BJ (cell line): ENCODE measurements at regions of chr2 and their contacts with region 1.

Region 1: DNA sequence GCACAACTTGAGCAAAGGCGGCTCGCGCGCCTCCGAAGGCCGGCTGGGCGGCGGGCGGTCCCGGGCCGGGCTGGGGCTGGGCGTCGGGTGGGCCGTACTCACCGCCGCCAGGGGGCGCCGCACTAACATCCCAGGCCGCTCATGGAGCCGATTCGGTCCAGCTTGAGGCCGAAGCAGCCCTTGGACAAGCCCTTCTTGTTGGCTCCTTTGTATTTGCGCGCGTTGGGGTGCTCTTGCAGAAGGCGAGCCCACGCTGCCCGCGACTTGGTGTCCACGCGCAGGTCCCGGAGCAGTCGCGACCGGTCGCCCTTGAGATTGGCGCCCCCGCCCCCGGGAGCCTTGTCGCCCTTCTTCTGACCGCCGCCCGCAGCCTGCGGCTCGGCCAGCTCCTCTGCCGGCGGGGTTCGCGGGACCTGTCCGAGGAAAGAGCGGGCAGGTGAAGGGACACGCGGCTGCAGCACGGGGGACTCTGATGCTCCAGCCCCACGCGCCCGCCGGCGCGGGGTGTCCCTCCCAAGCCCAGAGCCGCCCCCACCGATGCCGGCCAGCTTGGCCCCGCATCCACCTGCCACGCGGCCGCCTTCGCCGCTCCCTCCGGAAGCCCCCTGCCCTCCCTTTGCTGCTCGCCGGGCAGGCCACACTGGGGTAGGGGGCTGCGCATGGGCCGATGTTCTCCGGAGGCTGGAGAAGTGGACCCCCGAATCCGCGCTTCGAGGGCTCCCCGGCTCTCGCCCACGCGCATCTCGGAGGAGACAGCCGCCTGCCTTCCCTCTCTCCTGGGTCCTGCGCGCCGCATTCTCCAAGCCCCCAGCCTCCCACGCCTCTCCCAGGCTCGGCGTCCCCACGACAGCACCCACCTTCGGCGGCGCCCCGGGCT is 655 bp downstream of the NPPC start:
- DNase-seq: no peak
- H3K4me3 ChIP-seq: peak overlapping the region; percentile 32
- H3K27me3 ChIP-seq: peaks cover 39% of the 10 kb centered on the region
- CTCF ChIP-seq: peak; percentile 72

Region 2: GRCh38 chr2:231900486-231900942 is 25.0 kb before region 1 on chr2:
- CTCF ChIA-PET with region 1: interaction called, 68 read pairs
- POLR2A ChIA-PET with region 1: no interaction called
- DNase-seq: no peak
- H3K4me3 ChIP-seq: no peak overlapping the region
- H3K27me3 ChIP-seq: peaks cover 5% of the 10 kb centered on the region
- CTCF ChIP-seq: peak; percentile 95

Region 3: DNA sequence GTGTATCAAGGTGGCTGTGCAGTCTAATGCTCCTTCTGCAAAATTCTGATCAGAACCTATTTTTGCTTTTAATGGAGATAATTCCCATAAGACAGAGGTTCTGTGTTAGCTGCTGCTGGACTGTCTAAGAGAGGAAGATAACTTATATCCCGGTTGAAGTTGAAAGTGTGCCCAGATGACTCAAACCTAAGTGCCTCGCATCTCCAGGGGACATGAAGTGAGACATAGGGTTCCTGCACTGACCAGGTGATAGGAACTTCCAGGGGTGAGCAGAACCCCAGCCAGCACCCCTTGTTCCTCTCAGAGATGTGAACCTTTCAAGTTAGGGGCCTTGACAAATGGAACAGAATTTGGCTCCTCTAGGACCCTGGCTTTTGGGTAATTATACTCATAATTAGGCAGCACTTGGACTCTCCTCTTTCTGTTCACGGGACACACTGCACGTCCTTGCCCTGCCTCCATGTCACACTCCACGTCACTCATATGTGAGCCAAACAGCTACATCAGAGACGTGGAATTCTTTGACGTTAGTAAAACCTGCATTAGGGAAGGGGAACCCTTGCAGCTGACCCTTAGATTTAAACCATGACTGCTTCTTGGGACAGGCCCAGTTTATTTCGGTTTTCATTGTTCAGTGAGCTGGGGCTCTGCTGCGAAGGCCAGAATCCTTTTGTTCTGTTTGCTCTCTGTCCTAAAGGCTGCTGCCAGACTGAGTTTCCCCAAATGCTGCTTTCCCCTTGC is 348.5 kb after region 1 on chr2:
- CTCF ChIA-PET with region 1: no interaction called
- POLR2A ChIA-PET with region 1: interaction called, 10 read pairs
- DNase-seq: no peak
- H3K4me3 ChIP-seq: no peak overlapping the region
- H3K27me3 ChIP-seq: no peaks in the 10 kb centered on the region
- CTCF ChIP-seq: no peak

Region 4: GRCh38 chr2:232292395-232293154 is 367.0 kb after region 1 on chr2:
- CTCF ChIA-PET with region 1: interaction called, 13 read pairs
- POLR2A ChIA-PET with region 1: no interaction called
- DNase-seq: no peak
- H3K4me3 ChIP-seq: no peak overlapping the region
- H3K27me3 ChIP-seq: no peaks in the 10 kb centered on the region
- CTCF ChIP-seq: peak; percentile 73

Region 5: DNA sequence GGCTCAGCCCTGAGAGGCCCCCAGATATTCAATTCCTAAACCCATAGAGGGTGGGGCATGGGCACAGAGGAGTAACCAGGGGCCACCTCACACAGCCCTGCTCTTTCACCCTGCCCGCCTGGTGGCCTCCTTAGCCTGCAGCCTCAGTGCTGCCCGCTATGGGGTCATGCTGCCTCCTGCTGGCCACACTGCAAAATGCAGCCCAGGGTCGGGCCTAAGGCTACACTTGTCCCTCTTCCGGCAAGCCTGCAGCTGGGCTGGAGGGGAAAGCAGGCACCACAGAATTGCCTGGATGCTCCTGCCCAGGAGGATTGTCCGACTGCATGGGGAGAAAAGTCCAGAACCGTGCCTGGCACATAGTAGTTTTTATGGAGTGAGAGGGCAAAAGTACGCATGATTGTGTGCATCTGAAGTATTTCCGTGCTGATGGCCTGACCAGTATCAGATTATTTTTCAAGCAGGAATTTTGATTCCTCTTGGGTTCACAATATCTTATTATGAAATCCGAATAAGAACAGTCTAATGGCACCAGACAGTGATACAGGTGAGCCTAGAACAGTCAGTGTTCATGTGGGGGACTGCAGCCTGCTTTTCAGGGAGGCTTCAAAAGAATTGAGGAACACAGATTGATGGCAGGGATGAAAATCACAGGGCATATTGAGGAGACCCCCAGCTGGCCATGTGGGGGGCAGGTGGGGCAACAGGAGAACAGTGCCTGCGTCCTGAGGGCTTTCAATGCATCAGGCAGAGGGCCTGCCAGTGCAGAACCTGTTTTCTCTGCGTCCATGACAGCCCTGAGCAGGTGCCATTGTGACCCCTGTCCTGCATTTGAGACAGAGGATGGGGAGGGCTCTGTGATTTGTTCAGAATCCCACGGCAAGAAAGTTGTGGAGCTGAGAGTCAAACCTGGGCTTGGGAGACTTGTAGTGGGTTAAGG is 401.8 kb after region 1 on chr2:
- CTCF ChIA-PET with region 1: interaction called, 186 read pairs
- POLR2A ChIA-PET with region 1: no interaction called
- DNase-seq: peak; percentile 0
- H3K4me3 ChIP-seq: no peak overlapping the region
- H3K27me3 ChIP-seq: no peaks in the 10 kb centered on the region
- CTCF ChIP-seq: peak; percentile 78